ENCODE measurements at regions of chr9 and their contacts with region 1.

Region 1: GRCh38 chr9:110077925-110078324 is 130.0 kb downstream of the C9orf152 start:
- DNase-seq: no peak
- ATAC-seq: no peak
- H3K4me3 ChIP-seq: no peak overlapping the region
- H3K4me3 Mint-ChIP-seq: no peak overlapping the region
- H3K27ac ChIP-seq: peak overlapping the region in 1 of 2 donors; percentile 65
- H3K27ac Mint-ChIP-seq: no peak overlapping the region
- H3K4me1 ChIP-seq: peaks cover 70% of the 10 kb centered on the region in 2 donors
- H3K4me1 Mint-ChIP-seq: peaks cover 81% of the 10 kb centered on the region
- H3K27me3 ChIP-seq: no peaks in the 10 kb centered on the region
- H3K27me3 Mint-ChIP-seq: no peaks in the 10 kb centered on the region
- CTCF ChIP-seq: no peak

Region 2: GRCh38 chr9:110088099-110088498 is 10.2 kb after region 1 on chr9:
- CTCF ChIA-PET with region 1: interaction called, 4 read pairs
- POLR2A ChIA-PET with region 1: no interaction called
- intact Hi-C with region 1: loop called (anchors 2 kb)
- DNase-seq: no peak
- ATAC-seq: no peak
- H3K4me3 ChIP-seq: no peak overlapping the region
- H3K4me3 Mint-ChIP-seq: peak overlapping the region; percentile 20
- H3K27ac ChIP-seq: peak overlapping the region in 1 of 2 donors; percentile 58
- H3K27ac Mint-ChIP-seq: peak overlapping the region; percentile 64
- H3K4me1 ChIP-seq: peaks cover 62 to 69% of the 10 kb centered on the region in 2 donors
- H3K4me1 Mint-ChIP-seq: peaks cover 76% of the 10 kb centered on the region
- H3K27me3 ChIP-seq: no peaks in the 10 kb centered on the region
- H3K27me3 Mint-ChIP-seq: no peaks in the 10 kb centered on the region
- CTCF ChIP-seq: no peak

Region 3: DNA sequence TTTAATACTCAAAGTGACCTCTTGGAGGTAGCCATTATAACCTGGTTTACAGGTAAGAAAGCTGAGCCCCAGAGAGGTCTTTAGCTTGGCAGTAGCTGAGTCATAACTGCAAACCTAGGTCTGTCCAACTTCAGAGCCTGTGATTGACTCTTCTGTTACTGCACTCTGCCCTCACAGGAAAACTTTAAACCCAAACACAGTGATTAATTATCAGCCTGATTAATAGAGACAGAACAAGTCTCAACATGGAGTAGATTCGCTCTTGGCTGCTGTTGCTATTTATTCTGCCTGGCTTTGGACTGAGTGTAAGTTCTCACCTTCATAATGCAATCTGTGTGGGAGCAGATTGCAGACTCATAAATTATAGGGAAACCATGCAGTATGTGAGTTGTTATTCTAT is 205.8 kb after region 1 on chr9:
- CTCF ChIA-PET with region 1: no interaction called
- POLR2A ChIA-PET with region 1: no interaction called
- intact Hi-C with region 1: no loop called
- DNase-seq: no peak
- ATAC-seq: no peak
- H3K4me3 ChIP-seq: no peak overlapping the region
- H3K4me3 Mint-ChIP-seq: no peak overlapping the region
- H3K27ac ChIP-seq: no peak overlapping the region
- H3K27ac Mint-ChIP-seq: no peak overlapping the region
- H3K4me1 ChIP-seq: no peaks in the 10 kb centered on the region
- H3K4me1 Mint-ChIP-seq: no peaks in the 10 kb centered on the region
- H3K27me3 ChIP-seq: no peaks in the 10 kb centered on the region
- H3K27me3 Mint-ChIP-seq: peaks cover 14% of the 10 kb centered on the region
- CTCF ChIP-seq: no peak

Measured in B cell (primary cell).